ENCODE measurements at regions of chr17 and their contacts with region 1.

Region 1: DNA sequence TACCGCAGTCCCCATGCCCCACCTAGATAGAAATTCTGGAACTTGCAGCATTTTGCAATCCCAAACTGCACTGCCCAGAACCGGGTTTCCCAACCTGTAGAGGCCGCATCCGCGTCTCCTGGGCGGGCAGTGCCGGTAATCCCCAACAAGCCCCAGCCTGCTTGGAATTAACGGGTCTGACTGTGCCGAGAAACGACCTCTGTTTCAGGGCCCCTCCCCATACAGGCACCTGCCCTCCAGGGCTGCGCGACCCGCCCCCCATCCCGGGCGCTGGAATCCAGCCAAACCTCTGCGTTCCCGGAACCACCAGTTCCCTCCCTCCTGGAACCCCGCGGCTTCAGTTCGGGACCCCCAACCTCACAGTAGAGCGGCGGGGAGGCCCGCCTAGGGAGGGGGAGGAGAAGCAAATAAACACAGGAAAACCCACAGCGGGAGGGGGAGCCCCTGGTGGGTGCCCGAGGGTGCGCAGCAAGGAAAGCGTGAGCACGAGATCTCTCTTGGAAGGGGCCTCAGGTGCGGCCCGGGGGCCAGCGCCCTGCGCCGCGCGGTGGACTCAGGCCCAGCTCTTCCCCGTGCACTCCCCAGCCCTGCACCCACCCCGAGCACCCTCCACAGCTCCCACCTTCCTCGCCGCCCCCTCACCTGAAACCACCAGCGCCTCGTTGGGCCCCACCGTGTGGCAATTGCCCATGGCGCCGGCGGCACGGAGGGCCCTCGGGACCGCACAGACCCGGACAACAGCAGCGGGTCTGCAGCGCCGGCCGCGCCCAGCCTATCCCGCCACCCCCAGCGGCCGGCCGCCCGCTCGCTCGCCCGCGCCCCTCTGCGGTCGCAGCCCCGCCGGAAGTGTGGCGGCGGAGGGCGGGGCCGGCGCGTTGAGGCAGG is at the start of gene FLOT2:
- DNase-seq: peak; percentile 89
- H3K4me3 Mint-ChIP-seq: peak within 1 kb of the TSS; percentile 97
- H3K27ac Mint-ChIP-seq: peak within 1 kb of the TSS; percentile 98
- H3K4me1 Mint-ChIP-seq: peaks cover 64% of the 10 kb centered on the region
- H3K27me3 Mint-ChIP-seq: no peaks in the 10 kb centered on the region
- total RNA-seq, gene FLOT2: 109 and 111 TPM in 2 replicates

Region 2: DNA sequence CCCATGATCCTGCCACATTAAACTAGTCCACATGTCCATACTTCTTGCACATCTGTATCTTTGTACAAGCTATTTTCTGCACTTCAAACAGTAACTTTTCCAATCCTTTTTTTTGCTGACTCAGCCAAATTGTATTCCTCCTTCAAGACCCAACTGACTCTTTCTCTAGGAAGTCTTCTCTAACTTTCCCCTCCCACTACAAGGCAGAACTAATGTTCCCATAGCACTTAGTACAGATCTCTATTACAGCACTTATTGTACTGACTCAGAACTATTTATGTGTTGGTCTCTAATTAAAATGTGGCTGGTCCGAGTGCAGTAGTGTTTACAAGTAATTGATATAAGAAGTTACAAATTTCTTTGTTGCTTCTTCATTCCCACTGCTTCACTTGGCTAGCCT is 62.7 kb before region 1 on chr17:
- intact Hi-C with region 1: no loop called
- DNase-seq: no peak
- H3K4me3 Mint-ChIP-seq: no peak overlapping the region
- H3K27ac Mint-ChIP-seq: no peak overlapping the region
- H3K4me1 Mint-ChIP-seq: peaks cover 13% of the 10 kb centered on the region
- H3K27me3 Mint-ChIP-seq: no peaks in the 10 kb centered on the region

Region 3: DNA sequence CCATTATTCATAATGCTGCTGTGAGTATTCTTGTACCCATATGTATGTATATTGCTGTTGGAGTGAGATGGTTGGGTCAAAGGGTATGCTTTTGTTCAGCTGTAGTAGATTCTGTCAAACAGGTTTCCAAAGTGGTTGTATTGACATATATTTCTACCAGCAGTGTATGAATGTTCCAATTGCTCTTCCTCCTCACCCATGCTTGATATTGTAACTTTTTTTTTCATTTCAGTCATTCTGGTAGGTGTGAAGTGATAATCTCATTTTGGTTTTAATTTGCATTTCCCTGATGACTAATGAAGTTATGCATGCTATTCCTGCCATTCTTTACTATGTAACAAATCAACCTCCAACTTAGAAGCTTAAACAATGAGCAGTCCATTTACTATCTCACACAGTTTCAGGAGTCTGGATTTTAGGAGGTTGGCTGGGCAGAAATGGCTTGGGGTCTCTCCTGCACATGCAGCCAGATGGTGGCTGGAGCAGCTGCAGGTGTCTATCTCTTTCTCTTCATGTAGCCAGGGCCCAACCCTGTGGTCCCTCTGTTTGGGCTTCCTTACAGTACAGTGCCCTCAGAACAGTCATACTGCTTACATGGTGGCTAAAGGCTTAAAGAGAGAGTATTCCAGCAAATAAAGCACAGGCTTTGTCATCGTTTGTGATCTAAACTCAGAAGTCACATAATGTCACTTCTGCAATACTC is 21.1 kb before region 1 on chr17:
- intact Hi-C with region 1: loop called (anchors 2 kb)
- DNase-seq: no peak
- H3K4me3 Mint-ChIP-seq: no peak overlapping the region
- H3K27ac Mint-ChIP-seq: peak overlapping the region; percentile 21
- H3K4me1 Mint-ChIP-seq: peaks cover 19% of the 10 kb centered on the region
- H3K27me3 Mint-ChIP-seq: no peaks in the 10 kb centered on the region